A673 (cell line): ENCODE measurements at regions of chr10 and their contacts with region 1.

Region 1: GRCh38 chr10:114851336-114851735 is 29.8 kb downstream of the FHIP2A start:
- DNase-seq: no peak
- H3K4me3 ChIP-seq: no peak overlapping the region
- H3K27ac ChIP-seq: no peak overlapping the region
- H3K4me1 ChIP-seq: no peaks in the 10 kb centered on the region
- H3K27me3 ChIP-seq: no peaks in the 10 kb centered on the region
- CTCF ChIP-seq: no peak

Region 2: DNA sequence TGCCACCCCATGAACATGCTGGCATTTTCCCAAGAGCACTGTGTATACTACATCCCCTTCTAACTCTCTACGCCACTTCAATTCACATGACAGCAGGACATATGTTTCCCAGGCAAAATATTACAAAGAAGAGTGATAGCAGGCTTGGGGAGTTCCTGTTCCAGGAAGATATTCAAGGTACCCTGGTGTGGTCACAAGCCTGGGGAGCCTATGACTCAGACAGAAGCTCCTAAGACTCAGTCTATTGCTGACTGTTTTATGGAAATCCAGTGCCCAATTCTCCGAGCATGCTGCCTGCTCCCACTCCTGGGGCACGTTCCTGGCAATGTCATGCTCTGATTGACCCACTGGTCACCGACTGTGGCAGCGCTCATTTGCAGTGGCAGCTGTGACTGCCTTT is 169.8 kb before region 1 on chr10:
- CTCF ChIA-PET with region 1: no interaction called
- POLR2A ChIA-PET with region 1: interaction called, 13 read pairs
- intact Hi-C with region 1: no loop called
- DNase-seq: peak; percentile 93
- H3K4me3 ChIP-seq: no peak overlapping the region
- H3K27ac ChIP-seq: no peak overlapping the region
- H3K4me1 ChIP-seq: peaks cover 29% of the 10 kb centered on the region
- H3K27me3 ChIP-seq: no peaks in the 10 kb centered on the region
- CTCF ChIP-seq: no peak